ENCODE measurements at regions of chr2 and their contacts with region 1.

Region 1: DNA sequence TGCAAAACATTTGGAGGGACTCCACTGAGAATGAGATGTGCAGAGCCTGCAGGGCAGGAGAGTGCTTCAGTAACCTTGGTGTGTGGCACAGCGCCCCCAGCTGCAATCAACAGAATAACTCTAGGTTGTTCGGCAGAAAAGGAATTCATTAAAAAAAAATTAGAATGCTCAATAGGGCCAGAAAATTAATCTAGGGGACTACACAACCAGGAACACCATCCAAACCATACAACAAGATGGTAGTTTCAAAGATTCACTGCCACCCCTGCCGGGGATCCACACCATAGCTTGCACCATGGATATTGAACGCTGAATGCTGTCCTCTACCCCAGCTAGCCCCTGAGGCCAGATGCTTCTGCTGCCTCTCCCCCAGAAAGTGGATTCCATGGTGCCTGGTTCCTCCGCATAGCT is 50.1 kb downstream of the THUMPD2 start:
- DNase-seq: peak; percentile 35
- ATAC-seq: peak; percentile 73; the same call in 1 of the 2 replicates
- H3K4me3 ChIP-seq: no peak overlapping the region
- H3K27ac ChIP-seq: no peak overlapping the region
- H3K4me1 ChIP-seq: no peaks in the 10 kb centered on the region; the same call in 1 of the 2 replicates
- H3K27me3 ChIP-seq: no peaks in the 10 kb centered on the region
- CTCF ChIP-seq: peak; percentile 68
- POLR2A ChIP-seq: no peak
- RAD21 ChIP-seq: peak; percentile 60

Region 2: DNA sequence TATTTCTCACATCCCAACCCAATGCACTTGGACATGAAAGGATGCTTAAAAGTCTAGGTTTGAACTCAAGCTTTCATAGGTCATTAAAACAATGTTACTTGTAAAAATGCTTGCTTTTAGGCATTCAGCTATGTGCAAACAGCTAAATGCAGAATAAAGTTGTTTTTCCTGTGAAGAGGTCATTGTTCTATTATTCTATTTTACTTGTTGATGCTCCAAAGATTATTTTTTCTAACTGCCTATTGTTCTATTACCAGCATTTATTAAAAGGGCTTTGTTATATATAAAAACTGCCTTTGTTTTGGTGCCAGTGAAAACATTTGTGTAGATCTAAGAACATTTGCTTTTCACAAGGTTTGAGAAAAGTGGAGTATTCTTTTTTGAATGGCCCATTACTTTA is 13.9 kb before region 1 on chr2:
- CTCF ChIA-PET with region 1: interaction called, 17 read pairs
- POLR2A ChIA-PET with region 1: no interaction called
- dilution Hi-C with region 1: no loop called
- in situ Hi-C with region 1: no loop called
- intact Hi-C with region 1: no loop called
- DNase-seq: no peak
- ATAC-seq: no peak
- H3K4me3 ChIP-seq: no peak overlapping the region
- H3K27ac ChIP-seq: no peak overlapping the region
- H3K4me1 ChIP-seq: no peaks in the 10 kb centered on the region
- H3K27me3 ChIP-seq: no peaks in the 10 kb centered on the region
- CTCF ChIP-seq: no peak
- POLR2A ChIP-seq: no peak
- RAD21 ChIP-seq: no peak

Measured in IMR-90 (cell line).